Dorsolateral prefrontal cortex (tissue), 120 donors: ENCODE measurements at regions of chr6 and their contacts with region 1.

Region 1: DNA sequence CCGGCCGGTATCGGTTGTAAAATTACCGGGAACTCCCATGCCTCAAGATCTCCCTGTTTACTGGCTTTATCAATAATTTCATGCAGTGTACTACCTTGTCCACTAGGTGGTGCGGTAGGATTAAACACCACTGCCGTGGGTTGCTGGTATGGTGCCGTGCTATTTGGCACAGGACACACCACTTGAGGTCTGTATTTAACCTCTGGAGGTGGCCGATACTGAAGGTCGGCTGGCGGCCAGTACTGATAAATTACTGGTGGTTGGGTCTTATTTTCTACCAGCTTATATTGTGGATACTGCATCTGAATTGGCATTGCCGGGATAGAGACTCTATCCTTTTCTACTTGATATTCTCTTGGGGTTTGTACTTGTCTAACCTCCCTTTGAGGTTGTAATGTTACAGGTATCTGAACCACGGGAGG is 14.3 kb upstream of the PTCRA start:
- DNase-seq: peak in 8 of 10 donors; percentile 59 to 79 (median 66)
- H3K4me3 ChIP-seq: peak overlapping the region in 24 of 59 donors; percentile 1 to 41 (median 24)
- H3K27ac ChIP-seq: peak overlapping the region in 1 of 59 donors; percentile 42
- H3K27me3 ChIP-seq: no peaks in the 10 kb centered on the region
- CTCF ChIP-seq: peak; percentile 76 to 98 (median 91)

Region 2: DNA sequence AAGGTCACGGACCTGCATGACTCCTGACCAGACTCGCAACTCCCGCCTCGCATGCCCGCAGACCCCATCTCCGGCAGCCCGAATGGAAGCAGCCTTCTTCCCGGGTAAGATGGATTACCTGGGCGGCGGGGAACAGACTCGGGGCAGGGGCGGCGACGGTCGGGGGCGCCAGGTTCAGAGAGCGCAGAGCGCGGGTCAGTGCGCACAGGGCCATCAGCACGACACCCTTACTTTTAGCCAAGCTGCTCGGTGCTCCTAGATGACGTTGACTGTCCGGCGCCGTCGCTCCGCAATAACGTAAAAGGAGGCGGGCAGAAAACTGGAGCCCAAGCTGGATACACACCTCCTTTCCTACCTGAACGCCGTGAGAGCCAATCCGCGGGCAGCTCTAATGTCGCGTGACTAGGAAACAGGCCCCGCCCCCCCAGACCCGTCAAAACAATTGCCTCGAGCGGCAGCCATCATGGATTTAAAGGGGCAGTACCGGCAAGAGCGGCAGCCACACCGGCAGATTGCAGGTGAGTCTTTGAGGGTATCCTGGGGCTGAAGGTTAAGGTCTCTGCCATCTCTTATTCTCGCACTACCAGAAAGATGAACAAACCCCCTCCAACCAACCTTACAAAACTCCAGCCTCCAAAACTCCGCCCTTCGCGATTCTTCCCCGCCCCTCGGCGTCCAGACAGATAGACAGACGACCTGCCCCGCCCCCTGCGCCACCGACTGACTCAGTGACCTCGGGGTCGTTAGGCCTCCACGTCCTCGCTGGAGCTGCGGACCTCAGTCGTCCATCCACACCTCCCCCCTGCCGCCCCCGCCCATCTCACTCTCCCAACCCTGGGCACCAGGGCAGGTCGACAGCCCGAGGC is 157.9 kb after region 1 on chr6 and contains the starts of genes KLC4 and MRPL2:
- intact Hi-C with region 1: loop called in 1 of 2 experiments (anchors 10 kb)
- DNase-seq: peak; percentile 98 to 100 (median 100)
- H3K4me3 ChIP-seq: peak within 1 kb of the TSS; percentile 61 to 100 (median 92)
- H3K27ac ChIP-seq: peak within 1 kb of the TSS in 58 of 59 donors; percentile 31 to 96 (median 87)
- H3K27me3 ChIP-seq: no peaks in the 10 kb centered on the region
- CTCF ChIP-seq: peak in 8 of 56 donors; percentile 5 to 34 (median 16)
- total RNA-seq, gene KLC4: 39.5 to 88.4 (median 59.1) TPM
- total RNA-seq, gene MRPL2: 30.1 to 96.7 (median 58.0) TPM

Region 3: GRCh38 chr6:43143235-43144124 is 241.9 kb after region 1 on chr6:
- intact Hi-C with region 1: loop called (anchors 1 to 2 kb)
- DNase-seq: peak; percentile 73 to 94 (median 84)
- H3K4me3 ChIP-seq: peak overlapping the region in 32 of 59 donors; percentile 0 to 49 (median 24)
- H3K27ac ChIP-seq: peak overlapping the region in 46 of 59 donors; percentile 2 to 79 (median 50)
- H3K27me3 ChIP-seq: no peaks in the 10 kb centered on the region
- CTCF ChIP-seq: peak; percentile 68 to 96 (median 92)